ENCODE measurements at regions of chr1 and their contacts with region 1.

Region 1: GRCh38 chr1:193121616-193122593 is at the start of gene CDC73:
- DNase-seq: peak; percentile 97
- H3K4me3 ChIP-seq: peak within 1 kb of the TSS; percentile 79
- H3K4me3 Mint-ChIP-seq: peak within 1 kb of the TSS; percentile 89
- H3K27ac Mint-ChIP-seq: peak within 1 kb of the TSS; percentile 94
- H3K4me1 ChIP-seq: peaks cover 12% of the 10 kb centered on the region
- H3K4me1 Mint-ChIP-seq: peaks cover 9% of the 10 kb centered on the region
- H3K27me3 ChIP-seq: no peaks in the 10 kb centered on the region
- H3K27me3 Mint-ChIP-seq: no peaks in the 10 kb centered on the region
- CTCF ChIP-seq: peak; percentile 83 to 88
- total RNA-seq, gene CDC73: 48.9 and 50.5 TPM in 2 replicates

Region 2: GRCh38 chr1:193059268-193060225 is 62.4 kb before region 1 on chr1 and contains the starts of genes RO60 and UCHL5:
- CTCF ChIA-PET with region 1: interaction called, 3 read pairs
- POLR2A ChIA-PET with region 1: no interaction called
- intact Hi-C with region 1: loop called (anchors 1 kb)
- DNase-seq: peak; percentile 96 to 98
- H3K4me3 ChIP-seq: peak within 1 kb of the TSS; percentile 70
- H3K4me3 Mint-ChIP-seq: peak within 1 kb of the TSS; percentile 90
- H3K27ac Mint-ChIP-seq: peak within 1 kb of the TSS; percentile 91
- H3K4me1 ChIP-seq: peaks cover 5% of the 10 kb centered on the region; the same call in 1 of the 2 replicates
- H3K4me1 Mint-ChIP-seq: peaks cover 15% of the 10 kb centered on the region
- H3K27me3 ChIP-seq: no peaks in the 10 kb centered on the region
- H3K27me3 Mint-ChIP-seq: no peaks in the 10 kb centered on the region
- CTCF ChIP-seq: peak in 1 of 2 experiments; percentile 21
- total RNA-seq, gene RO60: 49.2 and 50.0 TPM in 2 replicates
- total RNA-seq, gene UCHL5: 49.6 and 49.9 TPM in 2 replicates

Region 3: DNA sequence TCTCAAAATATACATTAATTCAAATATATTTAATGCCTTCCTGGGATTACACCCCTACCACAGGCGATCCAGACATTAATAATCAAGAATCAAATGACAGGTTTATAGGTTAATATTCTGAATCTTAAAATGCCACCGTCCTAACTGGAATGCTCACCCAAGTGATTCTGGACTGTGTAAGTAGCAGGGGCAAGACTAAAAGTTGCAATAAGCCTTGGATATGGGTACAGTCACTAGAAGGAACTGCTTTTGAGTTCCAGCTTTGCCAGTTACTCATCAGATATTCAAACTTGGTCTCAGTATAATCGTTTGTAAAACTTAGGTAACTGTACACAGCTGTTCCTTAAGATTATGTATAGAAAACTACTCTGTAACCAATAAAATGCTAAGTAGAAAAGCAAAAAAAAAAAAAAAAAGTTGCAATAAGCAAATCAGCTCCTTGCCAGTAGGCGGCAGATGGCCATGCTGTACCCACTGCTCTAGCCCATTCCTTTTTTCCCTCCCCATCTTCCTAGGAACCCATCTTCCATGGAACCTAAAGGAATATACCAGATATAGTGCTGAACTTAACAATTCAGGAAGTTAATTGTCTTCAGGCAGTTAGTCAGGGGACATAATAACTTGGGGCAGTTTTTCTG is 52.0 kb before region 1 on chr1:
- CTCF ChIA-PET with region 1: no interaction called
- POLR2A ChIA-PET with region 1: no interaction called
- intact Hi-C with region 1: loop called (anchors 1 kb)
- DNase-seq: peak in 1 of 2 experiments; percentile 22
- H3K4me3 ChIP-seq: no peak overlapping the region
- H3K4me3 Mint-ChIP-seq: no peak overlapping the region
- H3K27ac Mint-ChIP-seq: no peak overlapping the region
- H3K4me1 ChIP-seq: no peaks in the 10 kb centered on the region
- H3K4me1 Mint-ChIP-seq: peaks cover 7% of the 10 kb centered on the region
- H3K27me3 ChIP-seq: no peaks in the 10 kb centered on the region
- H3K27me3 Mint-ChIP-seq: no peaks in the 10 kb centered on the region
- CTCF ChIP-seq: peak in 1 of 2 experiments; percentile 54

Region 4: DNA sequence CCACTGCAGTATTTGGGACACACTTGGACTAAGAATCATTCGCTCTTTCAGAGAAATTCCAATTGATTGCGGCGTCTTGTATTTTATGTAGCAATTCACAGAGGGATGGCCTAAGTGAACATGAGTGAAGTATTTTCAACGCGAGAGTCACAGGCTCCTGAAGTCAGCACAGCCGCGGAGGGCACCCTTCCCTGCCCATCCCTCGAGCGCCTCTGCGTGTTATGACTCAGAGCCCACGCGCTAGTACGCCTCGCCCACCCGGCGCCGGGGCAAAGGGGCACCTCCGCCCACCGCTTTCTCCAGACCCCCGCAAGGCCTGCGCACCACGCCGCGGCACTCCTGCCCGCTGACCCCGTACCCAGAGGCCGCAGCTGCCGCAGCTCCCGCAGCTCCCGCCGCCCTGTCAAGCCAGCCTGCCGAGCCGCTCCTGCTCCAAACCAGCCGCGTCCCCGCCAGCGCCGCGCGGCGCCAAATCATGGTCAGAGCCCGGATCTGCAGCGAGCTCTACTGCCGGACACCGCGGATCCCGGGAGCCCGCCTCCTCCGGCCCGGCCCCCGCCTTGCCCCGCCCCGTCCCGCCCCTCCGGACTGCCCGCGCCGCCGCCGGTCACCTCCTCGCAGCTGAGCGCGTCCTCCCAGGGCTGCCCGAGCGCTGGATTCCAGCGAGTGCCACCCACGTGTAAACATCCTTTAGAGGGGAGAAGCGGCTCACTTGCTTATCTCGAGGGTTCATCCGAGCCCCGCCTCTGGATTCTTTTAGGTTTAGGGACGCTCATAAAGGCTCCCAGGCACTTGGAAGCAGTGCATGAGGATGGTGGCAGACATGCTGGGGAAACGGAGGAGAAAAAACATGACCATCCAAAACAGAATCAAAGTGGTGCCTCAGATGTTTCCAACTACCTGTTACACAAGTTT is 16.7 kb before region 1 on chr1 and contains the start of gene GLRX2:
- CTCF ChIA-PET with region 1: interaction called, 8 read pairs
- POLR2A ChIA-PET with region 1: interaction called, 3 read pairs
- intact Hi-C with region 1: loop called (anchors 1 kb)
- DNase-seq: peak; percentile 88 to 90
- H3K4me3 ChIP-seq: peak within 1 kb of the TSS; percentile 57
- H3K4me3 Mint-ChIP-seq: peak within 1 kb of the TSS; percentile 79
- H3K27ac Mint-ChIP-seq: peak within 1 kb of the TSS; percentile 75
- H3K4me1 ChIP-seq: peaks cover 8% of the 10 kb centered on the region; the same call in 1 of the 2 replicates
- H3K4me1 Mint-ChIP-seq: peaks cover 13% of the 10 kb centered on the region
- H3K27me3 ChIP-seq: no peaks in the 10 kb centered on the region
- H3K27me3 Mint-ChIP-seq: no peaks in the 10 kb centered on the region
- CTCF ChIP-seq: peak in 1 of 2 experiments; percentile 5
- total RNA-seq, gene GLRX2: 20.7 and 21.5 TPM in 2 replicates

Region 5: GRCh38 chr1:193111641-193112090 is 10.2 kb before region 1 on chr1:
- CTCF ChIA-PET with region 1: no interaction called
- POLR2A ChIA-PET with region 1: no interaction called
- intact Hi-C with region 1: loop called (anchors 1 kb)
- DNase-seq: peak; percentile 74 to 75
- H3K4me3 ChIP-seq: no peak overlapping the region
- H3K4me3 Mint-ChIP-seq: peak overlapping the region; percentile 56
- H3K27ac Mint-ChIP-seq: peak overlapping the region; percentile 61
- H3K4me1 ChIP-seq: peaks cover 36% of the 10 kb centered on the region
- H3K4me1 Mint-ChIP-seq: peaks cover 23% of the 10 kb centered on the region
- H3K27me3 ChIP-seq: no peaks in the 10 kb centered on the region
- H3K27me3 Mint-ChIP-seq: no peaks in the 10 kb centered on the region
- CTCF ChIP-seq: no peak

Measured in Caco-2 (cell line).